ENCODE measurements at regions of chr6 and their contacts with region 1.

Region 1: GRCh38 chr6:97396880-97397279 is 113.9 kb upstream of the MMS22L start:
- DNase-seq: no peak
- ATAC-seq: no peak

Region 2: GRCh38 chr6:97077380-97077779 is 319.5 kb before region 1 on chr6:
- intact Hi-C with region 1: no loop called
- DNase-seq: no peak
- ATAC-seq: no peak

Region 3: GRCh38 chr6:97175806-97176205 is 221.1 kb before region 1 on chr6:
- intact Hi-C with region 1: no loop called
- DNase-seq: no peak
- ATAC-seq: no peak

Region 4: DNA sequence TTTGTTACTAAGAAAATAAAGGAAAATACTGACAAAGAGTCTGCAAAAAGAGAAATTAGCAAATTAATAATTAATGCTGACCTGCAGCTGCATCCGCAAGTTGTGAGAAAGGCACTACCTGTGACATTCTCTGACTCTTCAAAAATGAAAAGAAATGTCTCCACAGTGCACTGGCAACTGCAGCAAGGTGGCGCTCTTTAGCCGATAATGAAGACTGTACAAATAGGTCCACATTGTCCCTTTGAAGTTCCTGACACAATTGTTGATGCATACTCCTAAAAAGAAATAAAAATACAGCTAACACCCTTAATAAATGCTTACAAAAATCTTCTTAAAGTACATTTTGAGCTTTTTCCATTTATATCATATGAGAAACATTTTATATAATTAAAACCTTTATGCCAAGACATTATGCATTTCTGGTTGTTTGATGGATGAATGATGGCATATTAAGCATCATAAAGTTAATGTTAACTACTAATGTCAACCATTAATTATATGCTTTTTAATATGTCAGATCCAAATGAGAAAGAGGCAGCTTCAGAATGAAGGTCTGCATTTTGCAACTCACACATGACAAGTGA is 210.4 kb before region 1 on chr6:
- intact Hi-C with region 1: loop called (anchors 2 kb)
- DNase-seq: peak; percentile 51
- ATAC-seq: peak; percentile 68

Region 5: DNA sequence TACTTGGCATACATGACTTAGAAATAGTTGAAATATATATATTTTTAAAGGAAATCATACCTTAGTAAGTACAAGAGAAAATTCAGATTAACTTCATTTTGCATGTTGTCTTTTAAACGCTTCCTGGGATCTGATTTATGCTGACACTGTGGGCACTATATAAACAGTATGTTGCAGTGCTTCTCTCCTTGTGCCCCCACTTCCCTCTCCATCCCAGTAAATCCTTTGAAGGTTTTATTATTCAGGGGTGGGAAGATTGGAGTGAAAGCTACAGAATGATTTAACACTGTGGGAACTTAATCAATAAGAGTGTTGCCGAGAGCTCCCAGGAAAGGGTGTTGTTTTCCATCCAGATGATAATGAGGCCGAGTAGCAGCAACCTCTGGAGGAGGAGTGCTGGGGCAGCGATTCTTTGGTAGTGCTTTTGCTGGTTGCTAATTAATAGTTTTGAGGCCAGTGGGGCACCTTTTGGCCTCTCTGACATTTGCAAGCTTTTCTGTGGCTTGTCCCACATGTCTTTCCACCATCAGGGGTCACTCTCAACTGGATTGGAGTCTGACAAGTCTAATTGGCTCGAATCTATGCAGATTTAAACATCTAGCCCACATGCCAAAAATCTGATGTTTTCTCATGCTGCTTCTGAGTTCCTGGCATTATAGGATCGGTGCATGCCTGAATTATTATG is 69.1 kb after region 1 on chr6:
- intact Hi-C with region 1: no loop called
- DNase-seq: no peak
- ATAC-seq: no peak

Region 6: DNA sequence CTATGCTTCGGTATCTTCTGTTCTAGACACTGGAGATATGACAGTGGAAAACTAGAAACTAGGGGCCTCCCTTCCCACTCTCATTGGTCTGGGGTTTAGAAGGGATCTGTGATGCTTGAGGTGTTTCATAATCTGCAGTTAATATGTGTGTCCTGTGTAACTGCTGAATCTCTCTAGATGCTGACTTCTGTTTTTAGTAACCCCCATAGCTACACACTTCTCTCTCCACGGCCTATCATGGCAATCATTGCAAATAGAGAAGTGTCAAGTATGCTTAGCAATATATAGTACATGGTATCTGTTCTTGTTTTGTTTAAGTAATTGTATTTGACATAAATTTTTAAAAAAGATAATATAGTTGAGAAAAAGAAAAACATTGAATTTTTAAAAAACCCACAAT is 280.7 kb after region 1 on chr6:
- intact Hi-C with region 1: no loop called
- DNase-seq: no peak
- ATAC-seq: no peak